ENCODE measurements at regions of chr4 and their contacts with region 1.

Region 1: DNA sequence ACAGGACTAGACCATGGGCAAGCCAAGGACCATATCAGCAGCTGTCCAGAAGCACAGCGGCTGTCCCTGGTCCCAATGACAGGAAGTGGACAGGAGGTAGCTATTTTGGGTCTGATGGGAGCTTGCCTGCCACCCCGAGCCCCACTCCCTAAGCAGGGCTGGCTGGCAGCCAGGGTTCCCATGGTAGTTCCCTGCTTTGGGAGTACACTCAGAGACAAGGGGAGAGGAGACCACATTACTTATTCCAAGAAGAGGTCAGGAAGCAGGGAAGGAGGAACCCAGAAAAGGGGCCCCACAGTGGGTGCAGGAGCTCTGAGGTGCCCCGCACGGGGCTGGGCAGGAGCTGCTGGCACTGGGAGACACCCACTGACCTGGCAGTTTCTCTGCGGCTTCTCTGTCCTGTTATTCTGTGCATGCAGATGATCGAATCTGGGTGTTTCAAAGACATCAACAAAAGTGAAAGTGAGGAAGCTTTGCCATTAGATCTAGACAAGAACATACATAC is 36.3 kb downstream of the HTT-AS start:
- DNase-seq: peak in 1 of 2 donors; percentile 36
- ATAC-seq: peak in 2 of 3 donors; percentile 3 to 23
- H3K4me3 ChIP-seq: no peak overlapping the region
- H3K4me3 Mint-ChIP-seq: peak overlapping the region; percentile 86
- H3K27ac ChIP-seq: peak overlapping the region; percentile 11
- H3K27ac Mint-ChIP-seq: peak overlapping the region; percentile 72 to 74
- H3K4me1 ChIP-seq: peaks cover 54% of the 10 kb centered on the region
- H3K4me1 Mint-ChIP-seq: peaks cover 51 to 52% of the 10 kb centered on the region in 2 donors
- H3K27me3 ChIP-seq: no peaks in the 10 kb centered on the region
- H3K27me3 Mint-ChIP-seq: peaks cover 0 to 3% of the 10 kb centered on the region in 2 donors
- CTCF ChIP-seq: no peak

Region 2: GRCh38 chr4:2761035-2761923 is 276.7 kb before region 1 on chr4:
- intact Hi-C with region 1: loop called (anchors 5 kb)
- DNase-seq: no peak
- ATAC-seq: no peak
- H3K4me3 ChIP-seq: no peak overlapping the region
- H3K4me3 Mint-ChIP-seq: no peak overlapping the region
- H3K27ac ChIP-seq: no peak overlapping the region
- H3K27ac Mint-ChIP-seq: no peak overlapping the region
- H3K4me1 ChIP-seq: peaks cover 20% of the 10 kb centered on the region
- H3K4me1 Mint-ChIP-seq: peaks cover 8 to 14% of the 10 kb centered on the region in 2 donors
- H3K27me3 ChIP-seq: no peaks in the 10 kb centered on the region
- H3K27me3 Mint-ChIP-seq: no peaks in the 10 kb centered on the region
- CTCF ChIP-seq: no peak

Region 3: DNA sequence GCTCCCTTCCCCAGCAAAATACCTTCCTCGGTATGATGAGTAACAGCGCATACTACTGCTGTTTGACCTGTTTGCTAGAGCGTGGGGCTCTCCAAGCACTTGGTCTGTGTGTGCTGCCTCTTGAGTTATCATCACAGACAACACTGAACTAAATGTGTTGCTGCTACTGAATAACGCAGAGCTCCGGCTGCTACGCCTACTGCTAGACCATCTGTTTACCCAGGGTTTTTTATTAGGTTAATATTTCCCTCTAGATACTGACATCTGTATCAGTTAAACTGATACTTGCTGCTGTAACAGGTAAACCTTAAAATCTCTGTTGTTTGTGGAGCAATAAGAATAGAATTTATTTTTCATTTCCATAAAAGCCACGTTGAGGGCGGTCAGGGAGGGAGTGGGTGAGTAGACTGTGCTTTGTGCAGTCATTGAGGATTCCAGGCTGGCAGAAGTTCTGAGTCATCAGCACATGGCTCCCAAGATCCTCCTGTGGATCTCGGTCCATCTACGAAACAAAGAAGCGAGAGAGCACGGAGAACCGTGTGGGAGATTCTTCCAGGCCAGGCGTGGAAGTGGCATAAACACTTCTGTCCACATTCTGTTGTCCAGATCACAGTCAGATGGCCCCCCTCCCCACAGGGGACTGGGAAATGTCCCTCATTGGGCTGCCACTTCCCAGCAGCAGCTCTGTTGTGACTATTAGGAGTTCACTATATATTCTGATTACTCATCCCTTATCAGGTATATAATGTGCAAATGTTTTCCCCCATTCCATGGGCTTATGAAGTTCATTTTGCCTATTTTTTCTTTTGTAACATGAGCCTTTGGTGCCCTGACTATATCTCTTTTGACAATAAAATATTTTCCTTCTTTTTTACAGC is 60.6 kb before region 1 on chr4:
- intact Hi-C with region 1: loop called (anchors 1 kb)
- DNase-seq: no peak
- ATAC-seq: no peak
- H3K4me3 ChIP-seq: no peak overlapping the region
- H3K4me3 Mint-ChIP-seq: no peak overlapping the region
- H3K27ac ChIP-seq: no peak overlapping the region
- H3K27ac Mint-ChIP-seq: no peak overlapping the region
- H3K4me1 ChIP-seq: no peaks in the 10 kb centered on the region
- H3K4me1 Mint-ChIP-seq: peaks cover 5 to 6% of the 10 kb centered on the region in 2 donors
- H3K27me3 ChIP-seq: no peaks in the 10 kb centered on the region
- H3K27me3 Mint-ChIP-seq: no peaks in the 10 kb centered on the region
- CTCF ChIP-seq: no peak

Region 4: DNA sequence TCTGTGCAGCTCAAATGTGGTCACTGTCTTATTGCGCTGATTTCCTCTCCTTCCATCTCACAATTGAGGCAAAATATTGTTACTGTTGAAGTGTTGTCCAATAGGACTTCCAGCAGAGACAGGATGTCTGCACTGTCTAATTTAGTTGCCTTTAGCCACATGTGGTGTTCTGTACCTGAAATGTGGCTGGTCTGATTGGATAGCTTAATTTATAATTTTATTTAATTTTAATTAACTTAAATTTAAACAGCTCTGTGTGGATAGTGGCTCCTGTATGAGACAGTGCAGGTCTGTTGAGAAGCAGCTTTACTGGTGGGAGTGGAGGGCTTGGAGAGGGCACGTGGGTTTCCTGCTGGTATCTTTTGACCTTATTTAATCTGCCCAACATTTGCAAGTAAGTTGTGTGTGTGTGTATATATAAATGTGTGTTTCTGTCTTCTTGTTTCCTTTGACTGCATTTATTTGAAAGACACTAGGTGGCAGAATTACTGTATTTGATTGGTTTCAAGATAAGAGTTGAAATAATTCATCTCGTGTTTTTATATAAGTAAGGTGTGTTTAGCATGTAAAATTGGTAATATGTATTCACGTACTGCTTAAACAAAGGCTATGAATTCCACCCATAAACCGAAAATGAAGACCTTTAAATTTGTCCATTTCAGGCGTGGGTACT is 155.7 kb after region 1 on chr4:
- intact Hi-C with region 1: no loop called
- DNase-seq: peak in 1 of 2 donors; percentile 59
- ATAC-seq: no peak
- H3K4me3 ChIP-seq: no peak overlapping the region
- H3K4me3 Mint-ChIP-seq: peak overlapping the region; percentile 64
- H3K27ac ChIP-seq: peak overlapping the region; percentile 87
- H3K27ac Mint-ChIP-seq: peak overlapping the region; percentile 79 to 96
- H3K4me1 ChIP-seq: peaks cover 78% of the 10 kb centered on the region
- H3K4me1 Mint-ChIP-seq: peaks cover 87 to 94% of the 10 kb centered on the region in 2 donors
- H3K27me3 ChIP-seq: no peaks in the 10 kb centered on the region
- H3K27me3 Mint-ChIP-seq: no peaks in the 10 kb centered on the region
- CTCF ChIP-seq: peak; percentile 42

Region 5: GRCh38 chr4:3418029-3418762 is 380.2 kb after region 1 on chr4:
- intact Hi-C with region 1: no loop called
- DNase-seq: no peak
- ATAC-seq: no peak
- H3K4me3 ChIP-seq: no peak overlapping the region
- H3K4me3 Mint-ChIP-seq: no peak overlapping the region
- H3K27ac ChIP-seq: no peak overlapping the region
- H3K27ac Mint-ChIP-seq: no peak overlapping the region
- H3K4me1 ChIP-seq: no peaks in the 10 kb centered on the region
- H3K4me1 Mint-ChIP-seq: no peaks in the 10 kb centered on the region
- H3K27me3 ChIP-seq: no peaks in the 10 kb centered on the region
- H3K27me3 Mint-ChIP-seq: no peaks in the 10 kb centered on the region
- CTCF ChIP-seq: no peak

Measured in natural killer cell (primary cell).